ENCODE measurements at regions of chr1 and their contacts with region 1.

Region 1: DNA sequence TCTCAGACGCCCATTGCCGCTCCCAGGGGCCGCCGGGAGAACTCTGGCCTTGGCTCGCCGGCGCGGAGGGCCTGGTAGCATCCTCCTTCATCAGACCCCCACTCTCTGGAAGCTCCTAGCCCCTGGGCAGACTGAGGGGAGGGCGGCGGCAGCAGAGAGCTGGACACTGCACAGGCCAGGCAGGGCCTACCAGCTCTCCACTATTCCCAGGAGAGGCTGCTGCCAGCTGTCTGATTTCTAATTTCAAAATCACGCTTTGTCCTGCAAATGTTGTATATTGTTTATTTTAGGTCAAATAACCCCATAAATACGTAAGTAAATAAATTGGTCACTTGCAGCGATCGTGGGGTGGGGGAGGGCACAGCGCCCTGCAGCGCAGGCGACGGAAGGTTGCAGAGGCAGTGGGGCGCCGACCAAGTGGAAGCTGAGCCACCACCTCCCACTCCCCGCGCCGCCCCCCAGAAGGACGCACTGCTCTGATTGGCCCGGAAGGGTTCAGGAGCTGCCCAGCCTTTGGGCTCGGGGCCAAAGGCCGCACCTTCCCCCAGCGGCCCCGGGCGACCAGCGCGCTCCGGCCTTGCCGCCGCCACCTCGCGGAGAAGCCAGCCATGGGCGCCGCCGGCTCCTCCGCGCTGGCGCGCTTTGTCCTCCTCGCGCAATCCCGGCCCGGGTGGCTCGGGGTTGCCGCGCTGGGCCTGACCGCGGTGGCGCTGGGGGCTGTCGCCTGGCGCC is at the start of gene MTARC1:
- H3K4me3 ChIP-seq: peak within 1 kb of the TSS; percentile 52
- H3K27ac ChIP-seq: peak within 1 kb of the TSS; percentile 83; the same call in 1 of the 2 replicates
- H3K4me1 ChIP-seq: peaks cover 9% of the 10 kb centered on the region
- CTCF ChIP-seq: peak; percentile 59

Region 2: DNA sequence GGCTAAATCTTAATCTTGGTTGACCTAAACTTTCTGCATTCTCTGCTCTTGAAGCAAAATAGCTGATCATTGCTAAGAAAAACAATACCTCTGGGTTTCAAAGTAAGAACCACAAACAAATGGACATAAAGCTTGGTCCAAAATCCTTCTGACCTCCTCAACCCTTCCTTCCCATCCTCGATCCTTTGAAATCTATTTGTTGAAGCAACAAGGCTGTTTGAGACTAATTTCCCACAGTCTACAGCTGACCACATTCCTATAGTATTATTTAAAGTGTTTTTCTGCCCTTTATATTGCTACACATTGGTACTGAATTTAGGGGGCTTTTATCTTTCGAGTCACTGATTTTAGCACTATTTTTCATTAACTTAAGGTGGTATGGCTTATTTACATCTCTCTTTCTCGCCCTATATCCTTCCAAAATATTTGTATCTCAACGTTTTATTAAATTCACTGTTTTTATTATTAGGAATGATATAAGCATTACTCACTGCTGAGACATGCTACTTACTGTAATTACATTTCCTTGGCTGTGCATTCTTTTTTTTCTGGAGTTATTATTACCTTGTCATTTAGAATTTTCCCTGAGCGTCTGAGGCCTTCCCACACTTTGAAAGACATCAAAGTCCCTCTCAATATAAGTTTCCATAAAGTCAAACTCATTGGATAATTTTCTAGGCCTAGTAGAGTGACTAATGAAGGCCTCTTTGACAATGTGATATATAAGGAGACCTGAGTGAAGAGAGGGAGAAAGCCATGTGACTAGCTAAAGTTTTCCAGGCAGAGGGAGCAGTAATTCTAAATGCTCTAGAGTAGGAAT is 588.1 kb before region 1 on chr1:
- CTCF ChIA-PET with region 1: interaction called, 10 read pairs
- POLR2A ChIA-PET with region 1: no interaction called
- H3K4me3 ChIP-seq: no peak overlapping the region
- H3K27ac ChIP-seq: no peak overlapping the region
- H3K4me1 ChIP-seq: no peaks in the 10 kb centered on the region
- CTCF ChIP-seq: no peak

Region 3: DNA sequence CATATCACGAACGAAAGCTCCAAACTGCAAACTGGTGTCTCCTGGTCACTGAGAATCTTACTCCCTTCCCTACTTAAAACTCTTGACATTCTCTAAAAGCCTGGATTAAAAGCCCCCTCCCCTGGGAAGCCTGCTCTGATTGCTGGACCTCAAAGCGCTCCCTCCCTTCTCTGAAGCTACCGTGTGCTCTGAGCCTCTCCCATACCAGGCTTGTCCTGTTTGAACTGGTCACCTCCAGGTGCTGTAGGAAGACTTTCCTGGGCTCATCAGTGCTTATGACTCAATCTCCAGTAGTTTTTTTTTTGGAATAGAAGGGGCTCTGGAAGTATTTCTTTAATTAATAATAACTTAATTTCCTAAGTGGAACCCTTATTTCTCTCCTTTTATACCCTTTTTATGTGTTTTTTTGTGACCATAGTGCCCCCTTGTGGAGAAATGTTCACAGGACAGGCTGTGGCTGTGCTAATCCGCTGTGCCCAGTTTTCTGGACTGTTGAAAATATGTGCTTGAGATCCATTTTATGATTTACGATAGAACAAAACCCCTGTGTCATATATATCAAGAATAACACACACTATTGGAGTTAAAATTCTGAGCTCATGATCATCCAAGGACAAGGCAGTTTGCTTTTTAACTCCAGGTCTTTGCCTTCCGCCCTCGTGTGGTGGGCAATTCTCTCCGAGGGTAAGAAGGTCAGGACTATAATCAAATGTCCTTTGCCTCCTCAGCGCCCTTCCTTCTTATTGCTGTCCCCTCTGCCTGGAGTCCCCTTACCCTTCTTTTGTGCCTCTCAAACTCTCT is 17.1 kb after region 1 on chr1:
- CTCF ChIA-PET with region 1: interaction called, 11 read pairs
- POLR2A ChIA-PET with region 1: no interaction called
- H3K4me3 ChIP-seq: no peak overlapping the region
- H3K27ac ChIP-seq: no peak overlapping the region
- H3K4me1 ChIP-seq: no peaks in the 10 kb centered on the region
- CTCF ChIP-seq: peak; percentile 13; the same call in 1 of the 2 replicates

Region 4: DNA sequence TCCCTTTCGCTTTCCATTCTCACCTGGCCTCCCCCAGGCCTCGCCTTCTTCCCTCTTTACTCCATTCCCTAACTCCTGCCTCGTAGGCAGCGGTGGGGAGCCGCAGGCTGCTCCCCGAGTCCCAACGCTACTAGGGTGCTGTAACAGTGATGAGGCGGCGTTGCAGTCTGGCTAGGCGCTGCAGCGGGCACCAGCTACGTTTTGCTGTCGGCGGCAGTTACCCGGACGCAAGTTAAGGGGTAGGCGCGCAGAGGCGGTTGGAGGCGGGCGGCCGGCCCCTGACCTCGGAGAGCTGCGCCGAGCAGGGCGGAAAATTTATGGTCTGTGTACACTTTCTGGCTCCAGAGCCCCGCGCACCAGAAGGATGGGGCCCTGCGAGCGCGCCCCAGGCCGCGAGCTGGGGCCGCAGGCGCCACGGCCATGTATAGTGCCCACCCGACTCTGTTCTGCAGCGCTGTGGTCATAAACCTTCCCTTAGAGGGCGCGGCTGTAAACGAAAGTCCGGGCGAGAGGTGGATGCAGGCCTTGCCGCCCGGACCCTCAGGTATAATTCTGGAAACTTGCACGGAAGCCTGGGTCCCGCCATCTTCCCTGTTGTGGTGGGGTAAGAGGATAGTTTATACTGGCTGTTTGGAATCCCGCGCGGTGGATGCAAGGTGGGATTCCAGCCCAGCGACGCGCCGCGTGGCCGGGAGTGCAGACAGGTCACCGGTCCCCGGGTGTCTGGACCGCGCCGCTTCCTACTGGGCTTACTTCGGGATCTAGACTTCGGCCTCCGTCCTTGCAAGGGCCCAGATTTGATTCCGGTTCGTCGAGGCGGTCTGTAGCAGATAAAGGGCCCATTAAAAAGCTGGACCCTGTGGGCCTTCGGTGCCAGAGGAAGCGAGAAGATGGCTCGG is 107.8 kb after region 1 on chr1:
- CTCF ChIA-PET with region 1: no interaction called
- POLR2A ChIA-PET with region 1: no interaction called
- H3K4me3 ChIP-seq: no peak overlapping the region
- H3K27ac ChIP-seq: no peak overlapping the region
- H3K4me1 ChIP-seq: no peaks in the 10 kb centered on the region
- CTCF ChIP-seq: no peak